CD8-positive, alpha-beta memory T cell (primary cell): ENCODE measurements at regions of chr14 and their contacts with region 1.

Region 1: DNA sequence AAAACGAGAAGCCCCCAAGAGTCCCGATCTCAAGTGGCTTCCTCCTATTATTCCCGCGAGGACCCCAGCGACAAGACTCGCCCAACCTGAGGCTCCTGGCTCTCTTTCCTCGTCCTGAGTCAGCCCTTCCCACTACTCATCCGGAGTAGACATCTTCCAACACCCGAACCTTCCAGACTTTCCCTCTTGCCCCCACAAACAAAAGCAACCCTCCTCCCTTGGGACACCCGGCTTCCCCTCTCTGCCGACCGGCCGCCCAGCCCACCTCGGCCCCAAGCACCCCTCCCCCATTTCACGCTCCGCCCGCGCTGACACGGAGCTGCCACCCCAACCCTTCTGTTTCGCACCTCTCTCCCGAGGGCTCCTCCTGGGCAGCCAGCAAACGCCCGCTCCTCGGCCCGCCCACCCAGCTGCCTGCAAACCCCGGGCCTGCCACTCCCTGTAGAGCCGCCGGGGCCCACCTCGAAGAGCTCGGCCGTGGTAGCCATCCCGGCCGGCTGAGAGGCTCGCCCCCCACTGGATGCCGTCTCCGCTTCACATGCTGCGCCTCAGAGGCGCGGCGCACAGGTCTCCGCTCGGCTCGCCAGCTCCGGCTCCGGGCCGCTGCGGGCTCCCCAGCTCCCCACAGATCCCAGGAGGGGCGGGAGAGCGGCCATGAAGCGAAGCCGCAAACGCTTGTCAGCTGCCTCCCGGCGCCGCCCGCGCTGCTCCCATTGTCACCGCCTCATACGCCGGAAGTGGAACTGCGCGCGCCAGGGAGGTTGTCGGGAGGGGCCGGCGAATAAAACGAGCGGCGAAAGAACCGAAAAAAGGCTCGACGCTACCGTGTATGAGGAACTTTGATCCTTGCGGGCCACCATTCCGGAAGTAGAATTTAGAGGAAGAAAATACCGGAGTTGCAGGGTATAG is at the starts of genes AP5M1 and EXOC5:
- DNase-seq: peak; percentile 88 to 94 (median 93)
- H3K4me3 ChIP-seq: peak within 1 kb of the TSS; percentile 91
- H3K4me3 Mint-ChIP-seq: peak within 1 kb of the TSS; percentile 93 to 99 (median 98)
- H3K27ac ChIP-seq: peak within 1 kb of the TSS; percentile 97
- H3K27ac Mint-ChIP-seq: peak within 1 kb of the TSS; percentile 97 to 100 (median 99)
- H3K4me1 ChIP-seq: peaks cover 35% of the 10 kb centered on the region
- H3K4me1 Mint-ChIP-seq: peaks cover 66 to 85% (median 83%) of the 10 kb centered on the region in 3 donors
- H3K27me3 ChIP-seq: no peaks in the 10 kb centered on the region
- H3K27me3 Mint-ChIP-seq: no peaks in the 10 kb centered on the region
- total RNA-seq, gene AP5M1: 40.9 to 44.2 TPM
- total RNA-seq, gene EXOC5: 84.9 to 89.9 TPM

Region 2: GRCh38 chr14:57346741-57347140 is 78.3 kb after region 1 on chr14:
- CTCF ChIA-PET with region 1: no interaction called
- POLR2A ChIA-PET with region 1: no interaction called
- DNase-seq: no peak
- H3K4me3 ChIP-seq: no peak overlapping the region
- H3K4me3 Mint-ChIP-seq: no peak overlapping the region
- H3K27ac ChIP-seq: no peak overlapping the region
- H3K27ac Mint-ChIP-seq: no peak overlapping the region
- H3K4me1 ChIP-seq: no peaks in the 10 kb centered on the region
- H3K4me1 Mint-ChIP-seq: no peaks in the 10 kb centered on the region
- H3K27me3 ChIP-seq: no peaks in the 10 kb centered on the region
- H3K27me3 Mint-ChIP-seq: peaks cover 13 to 46% of the 10 kb centered on the region in 2 donors

Region 3: DNA sequence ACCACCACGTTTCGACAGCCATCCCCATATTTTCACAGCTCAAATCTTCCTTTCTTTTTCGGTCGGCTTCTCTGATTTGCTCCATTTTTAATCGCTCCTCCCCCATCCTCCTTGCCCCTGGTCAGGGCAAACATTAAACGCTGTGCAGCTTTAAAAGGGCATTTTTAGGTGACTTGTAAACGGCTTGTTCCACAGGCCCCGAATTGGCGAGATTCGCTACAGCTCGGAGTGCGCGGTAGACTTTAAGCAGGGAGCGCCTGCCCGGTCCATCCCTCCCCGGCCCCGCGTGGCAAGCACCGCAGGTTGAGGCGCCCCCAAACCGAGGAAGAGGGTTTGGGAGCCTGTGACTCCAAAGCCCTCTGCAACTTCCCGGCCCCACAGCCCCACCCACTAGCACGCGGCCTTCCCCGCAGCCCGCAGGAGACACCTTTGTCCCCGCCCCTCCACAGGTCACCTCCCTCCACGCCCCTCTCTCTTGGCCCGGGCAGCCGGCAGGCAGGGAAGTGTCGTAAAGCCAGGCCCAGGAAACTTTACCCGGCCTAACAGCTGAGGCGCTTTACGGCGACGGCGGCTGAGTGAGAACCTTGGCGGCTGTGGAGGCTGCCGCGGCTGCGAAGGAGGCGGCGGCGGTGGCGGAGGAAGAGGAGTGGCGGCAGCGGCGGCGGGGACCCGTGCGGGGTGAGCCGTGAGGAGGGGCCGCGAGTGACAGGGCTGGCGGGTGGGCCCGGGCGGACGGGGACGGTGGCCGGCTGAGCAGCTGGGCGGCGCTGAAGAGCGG is 121.8 kb after region 1 on chr14 and contains the start of gene NAA30:
- CTCF ChIA-PET with region 1: interaction called, 6 read pairs
- POLR2A ChIA-PET with region 1: interaction called, 23 read pairs
- DNase-seq: peak; percentile 91 to 97 (median 95)
- H3K4me3 ChIP-seq: peak within 1 kb of the TSS; percentile 75
- H3K4me3 Mint-ChIP-seq: peak within 1 kb of the TSS; percentile 87 to 99 (median 96)
- H3K27ac ChIP-seq: peak within 1 kb of the TSS; percentile 60
- H3K27ac Mint-ChIP-seq: peak within 1 kb of the TSS; percentile 84 to 99 (median 97)
- H3K4me1 ChIP-seq: peaks cover 34% of the 10 kb centered on the region
- H3K4me1 Mint-ChIP-seq: peaks cover 44 to 56% (median 53%) of the 10 kb centered on the region in 3 donors
- H3K27me3 ChIP-seq: no peaks in the 10 kb centered on the region
- H3K27me3 Mint-ChIP-seq: no peaks in the 10 kb centered on the region
- total RNA-seq, gene NAA30: 24.0 to 25.1 TPM